ENCODE measurements at regions of chr18 and their contacts with region 1.

Region 1: GRCh38 chr18:46073474-46074331 is 1.6 kb upstream of the PSTPIP2 start:
- DNase-seq: no peak
- ATAC-seq: peak; percentile 74
- H3K4me3 ChIP-seq: no peak overlapping the region
- H3K27ac ChIP-seq: no peak overlapping the region
- H3K4me1 ChIP-seq: no peaks in the 10 kb centered on the region
- H3K27me3 ChIP-seq: no peaks in the 10 kb centered on the region

Region 2: DNA sequence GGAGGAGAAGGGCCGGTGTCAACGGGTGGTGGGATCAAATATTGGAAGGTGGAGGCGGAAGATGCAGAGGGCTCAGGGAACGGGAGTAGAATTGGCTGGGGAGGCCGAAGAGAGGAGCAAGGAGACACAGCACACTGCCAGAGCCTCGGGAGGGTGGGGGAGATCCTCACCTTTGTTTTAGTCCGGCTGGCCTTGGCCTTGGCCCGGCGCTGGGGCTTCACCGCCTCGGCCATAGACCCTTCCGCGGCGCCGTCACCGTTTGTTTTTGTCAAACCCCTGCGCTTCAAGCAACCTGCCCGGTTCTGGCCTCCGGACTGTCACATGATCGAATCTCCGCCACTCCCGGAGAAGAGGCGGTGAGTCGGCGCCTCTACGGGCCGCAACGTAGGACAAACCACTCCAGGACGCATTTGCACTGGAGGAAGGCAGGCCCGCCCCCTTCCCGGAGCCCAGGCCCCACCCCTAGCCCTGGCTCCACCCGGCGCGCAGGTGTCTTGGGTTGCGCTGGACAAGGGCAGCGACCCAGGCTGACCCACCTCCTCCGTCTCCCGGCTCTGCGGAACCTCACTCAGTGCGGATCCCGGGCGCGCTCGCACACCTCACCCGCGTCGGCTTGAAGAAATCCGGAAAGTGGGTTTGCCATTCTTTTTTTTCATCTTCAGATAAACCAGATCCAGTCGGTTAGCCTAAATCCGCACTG is 106.5 kb before region 1 on chr18 and contains the start of gene EPG5:
- intact Hi-C with region 1: loop called in 1 of 2 experiments (anchors 5 kb)
- DNase-seq: peak; percentile 97 to 98
- ATAC-seq: peak; percentile 99
- H3K4me3 ChIP-seq: peak within 1 kb of the TSS; percentile 91 to 96
- H3K27ac ChIP-seq: peak within 1 kb of the TSS in 1 of 2 donors; percentile 24
- H3K4me1 ChIP-seq: no peaks in the 10 kb centered on the region
- H3K27me3 ChIP-seq: no peaks in the 10 kb centered on the region
- total RNA-seq, gene EPG5: 28.4 to 37.3 TPM

Region 3: DNA sequence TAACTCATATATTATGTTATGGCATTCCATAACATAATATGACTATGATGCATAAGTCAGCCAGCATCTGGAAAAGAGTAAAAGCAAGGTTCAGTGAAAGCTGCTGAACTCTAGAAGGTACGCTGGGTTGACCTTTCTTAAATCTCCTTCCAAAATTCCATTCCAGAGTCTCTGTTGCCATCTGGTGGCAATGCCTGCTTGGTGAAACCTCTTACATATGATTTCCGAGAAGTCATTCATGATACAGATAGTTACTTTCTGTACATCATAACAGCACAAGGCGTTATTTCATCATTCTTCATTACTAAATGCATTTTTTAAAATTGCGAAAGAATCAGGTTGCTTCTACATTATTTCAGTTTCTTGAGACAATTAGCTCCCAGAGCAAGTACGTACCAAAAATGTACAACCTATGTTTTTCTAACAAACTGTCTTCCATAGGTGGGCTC is 99.6 kb before region 1 on chr18:
- intact Hi-C with region 1: loop called (anchors 2 to 5 kb)
- DNase-seq: peak in 1 of 2 donors; percentile 58
- ATAC-seq: peak; percentile 76
- H3K4me3 ChIP-seq: no peak overlapping the region
- H3K27ac ChIP-seq: no peak overlapping the region
- H3K4me1 ChIP-seq: no peaks in the 10 kb centered on the region
- H3K27me3 ChIP-seq: no peaks in the 10 kb centered on the region

Measured in aorta (tissue), 5 donors.